ENCODE measurements at regions of chr15 and their contacts with region 1.

Region 1: DNA sequence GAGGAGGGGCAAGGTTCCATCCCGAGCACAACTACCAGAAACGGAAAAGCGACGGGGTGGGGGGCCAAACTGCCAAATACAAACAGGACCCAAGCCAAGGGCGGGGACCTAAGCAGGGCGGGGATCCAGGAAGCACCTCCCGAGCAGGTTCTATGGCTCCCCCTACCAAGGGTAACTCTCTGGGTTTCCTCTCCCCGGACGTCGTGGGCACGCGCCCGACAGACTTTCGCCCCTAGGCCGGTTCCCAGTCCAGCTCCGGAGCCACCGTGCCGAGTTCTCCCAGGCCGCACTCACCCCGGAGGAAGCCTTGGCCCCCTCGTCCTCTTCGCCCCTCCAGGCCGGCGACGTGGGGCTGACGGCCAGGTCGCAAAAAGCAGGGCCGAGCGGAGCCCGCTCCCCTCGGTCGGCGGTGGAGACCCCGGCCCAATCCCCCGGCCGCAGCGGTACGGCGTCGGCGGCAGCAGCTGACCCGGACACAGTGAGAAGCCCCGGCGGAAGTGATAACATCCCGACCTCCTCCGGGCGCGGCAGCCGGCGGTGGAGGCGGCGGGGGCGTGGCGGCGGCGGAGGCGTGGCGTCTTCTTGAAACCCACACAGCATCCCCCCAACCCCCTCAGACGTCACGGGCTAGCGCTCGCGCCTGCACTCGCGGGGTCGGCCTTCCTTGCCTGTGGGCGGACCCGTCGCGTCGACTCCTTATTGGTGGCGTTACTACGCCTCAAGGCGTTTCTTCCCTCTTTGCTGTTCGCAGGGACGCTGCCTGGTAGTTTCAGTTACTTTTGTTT is at the start of gene BNIP2:
- DNase-seq: peak; percentile 99
- H3K4me3 Mint-ChIP-seq: peak within 1 kb of the TSS; percentile 93
- H3K27ac Mint-ChIP-seq: peak within 1 kb of the TSS; percentile 98
- H3K4me1 Mint-ChIP-seq: peaks cover 42% of the 10 kb centered on the region
- H3K27me3 Mint-ChIP-seq: no peaks in the 10 kb centered on the region
- total RNA-seq, gene BNIP2: 59.4 and 60.5 TPM in 2 replicates

Region 2: GRCh38 chr15:59528965-59529402 is 160.0 kb before region 1 on chr15:
- intact Hi-C with region 1: no loop called
- DNase-seq: peak; percentile 51
- H3K4me3 Mint-ChIP-seq: no peak overlapping the region
- H3K27ac Mint-ChIP-seq: no peak overlapping the region
- H3K4me1 Mint-ChIP-seq: peaks cover 12% of the 10 kb centered on the region
- H3K27me3 Mint-ChIP-seq: peaks cover 17% of the 10 kb centered on the region

Region 3: GRCh38 chr15:59656897-59657634 is 32.0 kb before region 1 on chr15 and contains the start of gene GTF2A2:
- intact Hi-C with region 1: loop called (anchors 1 kb)
- DNase-seq: peak; percentile 94
- H3K4me3 Mint-ChIP-seq: no peak within 1 kb of the TSS
- H3K27ac Mint-ChIP-seq: peak within 1 kb of the TSS; percentile 87
- H3K4me1 Mint-ChIP-seq: peaks cover 10% of the 10 kb centered on the region
- H3K27me3 Mint-ChIP-seq: no peaks in the 10 kb centered on the region
- total RNA-seq, gene GTF2A2: 187 and 193 TPM in 2 replicates

Region 4: GRCh38 chr15:59751552-59752413 is 62.8 kb after region 1 on chr15:
- intact Hi-C with region 1: loop called (anchors 2 kb)
- DNase-seq: no peak
- H3K4me3 Mint-ChIP-seq: no peak overlapping the region
- H3K27ac Mint-ChIP-seq: no peak overlapping the region
- H3K4me1 Mint-ChIP-seq: peaks cover 11% of the 10 kb centered on the region
- H3K27me3 Mint-ChIP-seq: peaks cover 20% of the 10 kb centered on the region

Region 5: DNA sequence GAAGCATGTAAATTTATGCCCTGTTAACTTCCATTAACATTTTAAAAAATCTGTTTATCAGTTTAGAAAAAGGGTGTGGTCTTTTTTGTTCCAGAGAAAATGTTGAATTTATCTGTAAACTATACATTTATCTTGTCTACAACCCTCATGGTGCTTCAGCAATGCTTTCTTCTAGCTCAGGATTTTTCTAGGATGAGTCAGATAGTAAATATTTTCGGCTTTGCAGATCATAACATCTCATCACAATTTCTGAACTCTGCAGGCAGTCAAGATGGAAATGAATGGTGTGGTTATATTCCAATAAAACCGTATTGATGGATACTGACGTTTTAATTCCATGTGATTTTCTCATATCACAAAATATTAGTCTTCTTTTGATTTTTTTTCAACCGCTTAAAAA is 244.6 kb after region 1 on chr15:
- intact Hi-C with region 1: no loop called
- DNase-seq: no peak
- H3K4me3 Mint-ChIP-seq: no peak overlapping the region
- H3K27ac Mint-ChIP-seq: no peak overlapping the region
- H3K4me1 Mint-ChIP-seq: peaks cover 8% of the 10 kb centered on the region
- H3K27me3 Mint-ChIP-seq: peaks cover 46% of the 10 kb centered on the region

Region 6: GRCh38 chr15:60006203-60006862 is 317.3 kb after region 1 on chr15:
- intact Hi-C with region 1: loop called (anchors 2 kb)
- DNase-seq: peak; percentile 84
- H3K4me3 Mint-ChIP-seq: peak overlapping the region; percentile 95
- H3K27ac Mint-ChIP-seq: peak overlapping the region; percentile 94
- H3K4me1 Mint-ChIP-seq: peaks cover 47% of the 10 kb centered on the region
- H3K27me3 Mint-ChIP-seq: peaks cover 65% of the 10 kb centered on the region

Region 7: GRCh38 chr15:60326824-60327654 is 638.0 kb after region 1 on chr15:
- intact Hi-C with region 1: loop called (anchors 10 kb)
- DNase-seq: no peak
- H3K4me3 Mint-ChIP-seq: no peak overlapping the region
- H3K27ac Mint-ChIP-seq: no peak overlapping the region
- H3K4me1 Mint-ChIP-seq: peaks cover 5% of the 10 kb centered on the region
- H3K27me3 Mint-ChIP-seq: peaks cover 58% of the 10 kb centered on the region

Region 8: GRCh38 chr15:60478566-60479360 is 789.7 kb after region 1 on chr15 and contains the start of gene ICE2:
- intact Hi-C with region 1: loop called (anchors 2 kb)
- DNase-seq: peak; percentile 94
- H3K4me3 Mint-ChIP-seq: peak within 1 kb of the TSS; percentile 97
- H3K27ac Mint-ChIP-seq: peak within 1 kb of the TSS; percentile 99
- H3K4me1 Mint-ChIP-seq: peaks cover 42% of the 10 kb centered on the region
- H3K27me3 Mint-ChIP-seq: no peaks in the 10 kb centered on the region
- total RNA-seq, gene ICE2: 48.0 and 50.4 TPM in 2 replicates

Measured in activated T-helper 2 cell treated with anti-CD3 and anti-CD28 coated beads, Interferon-gamma antibody, Interleukin-2, Interleukin-4, amounts not matched to agents 10 μg/mL and 5 μg/mL and 100 μg/mL, durations not matched to agents 14 hours and 24 hours and 36 hours (primary cell).